ENCODE measurements at regions of chr12 and their contacts with region 1.

Region 1: DNA sequence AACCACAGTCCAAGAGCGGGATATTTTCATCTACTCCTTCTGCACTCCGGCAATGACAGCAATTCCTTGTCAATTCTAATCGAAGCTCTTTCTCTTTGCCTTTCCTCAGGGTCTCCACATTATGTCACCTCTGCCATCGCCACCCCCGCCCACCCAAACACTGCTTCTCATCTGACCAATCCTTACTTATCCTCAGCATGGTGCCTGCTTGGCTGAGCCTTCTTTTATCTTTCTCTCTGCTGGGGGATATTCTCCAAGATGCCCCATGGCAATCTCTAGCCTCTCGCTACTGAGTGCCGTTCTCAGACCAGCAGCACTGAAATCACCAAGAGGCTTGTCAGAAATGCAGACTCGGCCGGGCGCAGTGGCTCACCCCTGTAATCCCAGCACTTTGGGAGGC is 100.6 kb downstream of the PTPRB start:
- DNase-seq: no peak
- H3K4me3 ChIP-seq: no peak overlapping the region
- H3K27ac ChIP-seq: no peak overlapping the region
- H3K4me1 ChIP-seq: no peaks in the 10 kb centered on the region
- H3K27me3 ChIP-seq: no peaks in the 10 kb centered on the region
- CTCF ChIP-seq: no peak

Region 2: DNA sequence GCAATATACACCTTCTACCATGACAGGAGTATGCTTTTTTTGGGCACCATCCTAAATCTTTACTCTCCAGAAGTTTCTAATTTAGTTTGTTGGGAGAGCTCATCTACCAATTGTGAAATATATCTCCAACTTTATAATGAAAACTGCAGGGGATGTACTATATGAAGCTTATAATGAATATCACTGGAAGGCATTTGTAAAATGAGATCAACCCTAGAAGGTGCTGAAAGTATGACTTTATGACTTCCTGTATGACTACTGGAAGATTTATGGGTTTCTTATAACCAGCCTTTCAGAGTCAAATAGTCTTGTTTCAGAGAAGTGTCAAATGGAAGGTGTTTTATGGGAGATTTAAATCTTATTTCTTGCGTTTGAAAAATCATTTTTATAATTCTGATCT is 588.8 kb before region 1 on chr12:
- CTCF ChIA-PET with region 1: interaction called, 15 read pairs
- POLR2A ChIA-PET with region 1: no interaction called
- intact Hi-C with region 1: no loop called
- DNase-seq: peak; percentile 67
- H3K4me3 ChIP-seq: no peak overlapping the region
- H3K27ac ChIP-seq: no peak overlapping the region
- H3K4me1 ChIP-seq: peaks cover 19% of the 10 kb centered on the region
- H3K27me3 ChIP-seq: no peaks in the 10 kb centered on the region
- CTCF ChIP-seq: no peak

Region 3: DNA sequence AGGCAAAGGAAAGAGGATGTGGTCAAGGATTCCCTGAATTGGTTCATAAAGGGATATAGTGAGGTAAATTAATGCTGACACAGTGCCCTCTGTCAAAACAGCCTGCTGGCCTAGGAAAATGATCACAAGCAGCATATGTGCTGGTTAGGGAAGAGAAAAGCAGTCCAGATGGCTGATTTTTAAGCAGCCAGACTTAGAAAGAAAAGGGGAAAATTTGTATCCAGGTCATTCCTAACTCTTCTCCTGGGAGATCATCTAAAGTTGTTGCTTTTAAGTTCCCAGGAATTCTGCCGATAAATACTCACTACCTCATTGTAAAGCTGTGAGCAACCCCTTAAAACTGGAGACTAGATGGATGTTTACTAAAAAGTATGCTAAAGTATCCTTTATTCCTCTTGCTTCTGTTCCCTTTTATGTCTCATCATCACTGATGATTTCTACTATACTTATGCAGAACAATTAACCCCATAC is 339.8 kb before region 1 on chr12:
- CTCF ChIA-PET with region 1: no interaction called
- POLR2A ChIA-PET with region 1: no interaction called
- intact Hi-C with region 1: no loop called
- DNase-seq: no peak
- H3K4me3 ChIP-seq: no peak overlapping the region
- H3K27ac ChIP-seq: peak overlapping the region; percentile 43
- H3K4me1 ChIP-seq: peaks cover 32% of the 10 kb centered on the region
- H3K27me3 ChIP-seq: no peaks in the 10 kb centered on the region
- CTCF ChIP-seq: no peak